A549 (cell line): ENCODE measurements at regions of chr16 and their contacts with region 1.

Region 1: DNA sequence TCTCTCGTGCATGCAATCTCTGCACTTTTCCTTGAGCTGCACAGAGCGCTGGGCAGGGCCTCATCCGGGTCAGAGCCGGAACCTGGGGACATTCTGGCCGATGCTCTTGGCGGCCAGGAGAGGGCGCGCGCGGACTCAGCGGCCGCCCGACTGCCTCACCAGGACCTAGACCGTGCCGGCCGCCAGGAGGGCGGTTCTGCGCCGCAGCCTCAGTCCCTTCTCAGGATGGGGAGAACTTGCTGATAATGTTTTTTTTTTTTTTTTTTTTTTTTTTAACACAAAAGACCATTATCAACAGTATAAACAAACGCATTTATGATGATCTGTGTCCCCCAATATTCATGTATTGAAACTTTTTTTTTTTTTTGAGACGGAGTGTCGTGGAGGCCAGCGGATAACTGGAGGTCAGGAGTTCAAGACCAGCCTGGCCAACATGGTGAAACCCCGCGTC is 8.1 kb upstream of the FLYWCH2 start:
- DNase-seq: peak; percentile 59 to 87
- ATAC-seq: peak; percentile 99 to 100
- H3K4me3 ChIP-seq: no peak overlapping the region
- H3K27ac ChIP-seq: peak overlapping the region; percentile 51 to 77; a peak in 5 of 6 replicates
- H3K4me1 ChIP-seq: peaks cover 5% of the 10 kb centered on the region; the same call in 1 of the 3 replicates
- CTCF ChIP-seq: peak; percentile 91
- EP300 ChIP-seq: no peak
- POLR2A ChIP-seq: no peak
- RAD21 ChIP-seq: peak; percentile 68 to 71

Region 2: GRCh38 chr16:2919511-2920255 is 44.7 kb after region 1 on chr16:
- CTCF ChIA-PET with region 1: interaction called, 56 read pairs
- POLR2A ChIA-PET with region 1: no interaction called
- DNase-seq: peak; percentile 61 to 73
- ATAC-seq: peak; percentile 69 to 71; a peak in 5 of 6 replicates
- H3K4me3 ChIP-seq: no peak overlapping the region
- H3K27ac ChIP-seq: no peak overlapping the region
- H3K4me1 ChIP-seq: peaks cover 13% of the 10 kb centered on the region
- CTCF ChIP-seq: peak; percentile 88
- EP300 ChIP-seq: no peak
- POLR2A ChIP-seq: no peak
- RAD21 ChIP-seq: peak; percentile 81